Common myeloid progenitor, CD34-positive (primary cell): ENCODE measurements at regions of chr17 and their contacts with region 1.

Region 1: DNA sequence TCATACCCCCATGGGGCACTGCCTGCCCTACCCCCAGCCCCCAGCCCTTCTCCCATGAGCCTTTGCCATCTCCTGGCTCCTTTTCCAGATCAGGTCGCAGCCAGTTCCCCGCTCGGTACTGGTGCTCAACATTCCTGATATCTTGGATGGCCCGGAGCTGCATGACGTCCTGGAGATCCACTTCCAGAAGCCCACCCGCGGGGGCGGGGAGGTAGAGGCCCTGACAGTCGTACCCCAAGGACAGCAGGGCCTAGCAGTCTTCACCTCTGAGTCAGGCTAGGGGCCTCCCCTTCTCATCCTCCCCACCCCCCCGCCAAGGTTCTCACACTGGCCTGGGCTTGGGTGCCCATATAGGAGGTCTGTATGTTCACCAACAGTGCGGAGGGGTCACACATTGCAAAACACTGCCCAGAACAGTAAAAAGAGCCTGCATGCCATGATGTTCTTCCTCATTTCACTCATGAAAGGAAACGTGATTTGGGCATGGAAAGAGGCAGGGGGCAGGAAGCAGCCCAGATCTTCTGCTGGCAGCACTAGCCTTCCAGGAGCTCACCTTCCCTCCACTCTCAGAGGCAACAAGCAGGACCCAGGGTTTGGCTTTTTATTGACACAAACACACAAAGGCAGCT is 7.5 kb downstream of the IFI35 start:
- DNase-seq: no peak
- H3K4me3 ChIP-seq: no peak overlapping the region
- H3K27ac ChIP-seq: no peak overlapping the region
- H3K4me1 ChIP-seq: peaks cover 0 to 28% (median 15%) of the 10 kb centered on the region in 4 experiments
- H3K27me3 ChIP-seq: no peaks in the 10 kb centered on the region

Region 2: DNA sequence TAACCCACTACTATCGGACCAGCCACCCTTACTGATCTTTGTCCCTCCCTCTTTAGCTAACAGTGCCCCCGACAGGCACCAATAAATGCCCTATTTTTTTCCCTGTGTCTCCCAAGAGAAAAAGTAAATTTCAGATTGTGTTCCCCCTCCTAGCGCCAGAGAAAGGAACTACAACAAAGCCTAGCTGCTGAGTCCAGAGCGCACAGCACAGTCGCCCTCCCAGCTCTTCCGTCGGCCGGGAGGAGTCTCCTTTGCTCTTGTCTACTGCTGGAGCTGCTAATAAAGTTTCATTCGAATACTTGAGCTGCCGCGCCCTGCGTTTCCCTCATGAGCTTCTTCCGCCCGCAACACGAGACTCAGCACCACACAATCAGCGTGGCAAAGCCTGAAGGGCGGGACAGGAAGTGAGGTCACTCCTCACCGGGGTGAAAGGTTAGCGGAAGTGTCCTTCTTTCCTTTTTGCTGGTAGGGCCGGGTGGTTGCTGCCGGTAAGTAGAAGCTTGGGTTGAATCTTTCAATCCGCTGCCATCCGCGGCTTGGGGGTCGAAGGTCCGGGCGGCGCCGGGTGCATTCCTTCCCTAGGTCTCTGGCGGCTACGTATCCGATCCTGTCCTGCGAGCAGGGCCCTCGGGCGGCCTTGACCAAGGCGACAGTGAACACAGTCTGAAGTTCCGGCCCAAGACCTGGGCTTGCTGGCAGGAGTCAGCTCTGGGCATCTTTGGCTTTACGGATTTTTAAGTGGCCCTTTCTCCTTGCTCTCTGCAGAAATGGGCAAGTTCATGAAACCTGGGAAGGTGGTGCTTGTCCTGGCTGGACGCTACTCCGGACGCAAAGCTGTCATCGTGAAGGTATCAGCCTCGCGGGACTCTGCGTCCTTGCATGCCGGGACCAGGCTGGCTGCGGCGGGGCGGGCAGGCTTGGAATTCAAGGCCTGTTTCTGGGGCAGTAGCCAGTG is 15.9 kb before region 1 on chr17 and contains the start of gene RPL27:
- CTCF ChIA-PET with region 1: interaction called, 10 read pairs
- POLR2A ChIA-PET with region 1: no interaction called
- DNase-seq: peak; percentile 100
- H3K4me3 ChIP-seq: peak within 1 kb of the TSS; percentile 75 to 97 (median 93)
- H3K27ac ChIP-seq: peak within 1 kb of the TSS; percentile 97 to 99
- H3K4me1 ChIP-seq: peaks cover 4 to 27% (median 19%) of the 10 kb centered on the region in 4 experiments
- H3K27me3 ChIP-seq: no peaks in the 10 kb centered on the region